CD8-positive, alpha-beta memory T cell (primary cell): ENCODE measurements at regions of chr7 and their contacts with region 1.

Region 1: GRCh38 chr7:30727061-30727945 is 24.6 kb upstream of the INMT start:
- DNase-seq: peak; percentile 35 to 81 (median 74)
- H3K4me3 ChIP-seq: peak overlapping the region; percentile 73
- H3K4me3 Mint-ChIP-seq: peak overlapping the region; percentile 70 to 91 (median 85)
- H3K27ac ChIP-seq: peak overlapping the region; percentile 34
- H3K27ac Mint-ChIP-seq: peak overlapping the region; percentile 64 to 95 (median 88)
- H3K4me1 ChIP-seq: peaks cover 52% of the 10 kb centered on the region
- H3K4me1 Mint-ChIP-seq: peaks cover 44 to 65% (median 54%) of the 10 kb centered on the region in 3 donors
- H3K27me3 ChIP-seq: no peaks in the 10 kb centered on the region
- H3K27me3 Mint-ChIP-seq: peaks cover 0 to 1% of the 10 kb centered on the region in 2 donors

Region 2: DNA sequence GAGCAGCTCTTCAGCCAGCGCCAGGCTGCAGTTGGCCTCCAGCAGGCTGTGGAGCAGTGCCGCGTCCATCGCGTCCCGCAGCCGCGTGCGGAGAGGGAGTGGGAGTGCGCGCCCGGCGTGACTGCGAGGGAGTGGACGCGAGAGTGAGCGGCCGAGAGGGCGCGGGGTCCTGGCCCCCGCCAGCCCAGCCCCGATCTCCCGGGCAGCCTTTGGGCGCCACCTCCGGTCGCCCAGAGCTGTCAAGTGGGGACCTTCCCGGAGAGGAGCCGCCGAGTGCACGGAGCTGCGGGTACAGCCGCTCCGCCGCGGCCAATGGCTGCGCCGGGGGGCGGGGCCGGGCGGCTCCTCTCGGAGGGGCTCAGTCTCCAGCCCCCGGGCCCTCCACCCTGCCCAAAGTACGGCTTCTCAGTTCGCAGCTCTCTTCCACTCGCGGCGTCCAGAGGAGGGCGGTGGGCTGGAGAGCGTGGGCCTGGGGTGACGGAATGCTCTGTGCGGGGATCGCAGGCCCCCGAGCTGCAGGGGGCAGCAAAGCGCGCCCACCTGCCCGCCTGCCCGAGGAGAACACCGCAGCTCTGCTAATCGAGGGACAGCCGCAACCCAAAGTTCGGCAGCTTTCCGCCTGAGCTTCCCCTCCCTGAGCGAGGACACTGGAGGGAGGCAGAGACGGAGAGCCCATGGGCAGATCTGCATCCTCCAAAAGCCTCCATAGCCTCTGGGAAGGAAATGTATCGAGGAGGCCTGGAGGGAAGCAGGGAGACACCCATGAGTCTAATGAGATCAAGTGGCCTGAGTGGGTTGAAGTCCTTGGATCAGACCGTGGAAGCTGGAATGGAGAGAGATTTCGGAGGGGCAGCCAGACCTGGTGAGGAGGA is 44.9 kb before region 1 on chr7 and contains the start of gene CRHR2:
- CTCF ChIA-PET with region 1: interaction called, 11 read pairs
- POLR2A ChIA-PET with region 1: no interaction called
- DNase-seq: peak in 4 of 5 donors; percentile 13 to 50 (median 19)
- H3K4me3 ChIP-seq: peak within 1 kb of the TSS; percentile 19
- H3K4me3 Mint-ChIP-seq: peak within 1 kb of the TSS; percentile 63 to 91 (median 77)
- H3K27ac ChIP-seq: no peak within 1 kb of the TSS
- H3K27ac Mint-ChIP-seq: peak within 1 kb of the TSS in 1 of 8 donors; percentile 6
- H3K4me1 ChIP-seq: peaks cover 8% of the 10 kb centered on the region
- H3K4me1 Mint-ChIP-seq: peaks cover 10 to 13% (median 13%) of the 10 kb centered on the region in 3 donors
- H3K27me3 ChIP-seq: peaks cover 34% of the 10 kb centered on the region
- H3K27me3 Mint-ChIP-seq: peaks cover 34 to 73% of the 10 kb centered on the region in 2 donors
- total RNA-seq, gene CRHR2: not detected